CD8-positive, alpha-beta T cell (primary cell): ENCODE measurements at regions of chr2 and their contacts with region 1.

Region 1: DNA sequence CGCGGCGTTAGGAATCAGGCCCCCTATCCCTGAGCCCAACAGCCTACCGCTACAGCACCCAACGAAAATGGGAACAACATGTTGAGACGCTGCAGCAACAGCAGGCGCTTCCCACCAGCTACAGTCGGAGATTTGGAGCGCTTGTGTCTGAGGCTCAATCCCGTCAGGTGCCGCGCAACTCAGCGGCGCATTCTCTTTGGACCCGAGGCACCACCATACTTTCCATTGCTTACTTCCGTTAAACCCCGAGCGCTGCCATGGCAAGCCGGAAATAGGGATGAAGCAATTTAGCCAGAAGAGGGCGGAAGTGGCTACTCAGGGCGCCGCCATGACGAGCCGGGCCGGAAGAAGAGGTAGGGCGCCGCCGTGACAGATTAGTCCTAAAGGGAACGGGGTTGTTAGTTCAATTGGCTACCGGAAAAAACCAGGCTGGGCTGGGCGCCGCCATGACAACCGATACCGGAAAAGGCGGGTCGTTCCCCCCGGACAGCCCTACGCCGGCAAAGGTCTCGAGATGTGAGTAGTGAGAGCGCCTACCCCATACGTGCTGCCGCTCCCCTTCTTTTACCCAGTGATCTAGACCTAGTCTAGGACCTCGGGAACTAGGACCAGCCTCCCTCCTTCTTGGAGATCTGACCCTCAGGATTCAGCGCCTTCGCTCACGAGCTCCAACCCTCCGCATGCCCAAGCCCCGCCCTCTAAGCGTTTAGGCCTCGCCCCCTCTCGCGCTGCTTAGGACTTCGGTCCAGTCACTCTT is at the start of gene CHCHD5:
- DNase-seq: peak; percentile 85 to 97 (median 92)
- ATAC-seq: peak; percentile 84
- H3K4me3 ChIP-seq: peak within 1 kb of the TSS; percentile 79 to 96
- H3K4me3 Mint-ChIP-seq: peak within 1 kb of the TSS; percentile 95
- H3K27ac ChIP-seq: peak within 1 kb of the TSS; percentile 75 to 95
- H3K27ac Mint-ChIP-seq: peak within 1 kb of the TSS; percentile 94
- H3K4me1 ChIP-seq: peaks cover 24% of the 10 kb centered on the region
- H3K4me1 Mint-ChIP-seq: peaks cover 35% of the 10 kb centered on the region
- H3K27me3 ChIP-seq: no peaks in the 10 kb centered on the region
- H3K27me3 Mint-ChIP-seq: no peaks in the 10 kb centered on the region
- CTCF ChIP-seq: no peak
- total RNA-seq, gene CHCHD5: 12.0 to 15.5 TPM

Region 2: GRCh38 chr2:112187805-112188596 is 396.3 kb before region 1 on chr2:
- CTCF ChIA-PET with region 1: no interaction called
- POLR2A ChIA-PET with region 1: no interaction called
- intact Hi-C with region 1: loop called in 1 of 2 experiments (anchors 10 kb)
- DNase-seq: peak; percentile 30 to 85 (median 77)
- ATAC-seq: peak; percentile 82
- H3K4me3 ChIP-seq: peak overlapping the region; percentile 16 to 23
- H3K4me3 Mint-ChIP-seq: peak overlapping the region; percentile 59
- H3K27ac ChIP-seq: peak overlapping the region; percentile 72 to 94
- H3K27ac Mint-ChIP-seq: peak overlapping the region; percentile 100
- H3K4me1 ChIP-seq: peaks cover 31% of the 10 kb centered on the region
- H3K4me1 Mint-ChIP-seq: peaks cover 63% of the 10 kb centered on the region
- H3K27me3 ChIP-seq: no peaks in the 10 kb centered on the region
- H3K27me3 Mint-ChIP-seq: no peaks in the 10 kb centered on the region
- CTCF ChIP-seq: no peak

Region 3: GRCh38 chr2:112481050-112481527 is 103.2 kb before region 1 on chr2:
- CTCF ChIA-PET with region 1: interaction called, 13 read pairs
- POLR2A ChIA-PET with region 1: interaction called, 3 read pairs
- intact Hi-C with region 1: loop called (anchors 1 kb)
- DNase-seq: peak; percentile 63 to 90 (median 84)
- ATAC-seq: peak; percentile 78
- H3K4me3 ChIP-seq: peak overlapping the region; percentile 56 to 87
- H3K4me3 Mint-ChIP-seq: peak overlapping the region; percentile 95
- H3K27ac ChIP-seq: peak overlapping the region; percentile 30 to 53
- H3K27ac Mint-ChIP-seq: peak overlapping the region; percentile 93
- H3K4me1 ChIP-seq: peaks cover 16% of the 10 kb centered on the region
- H3K4me1 Mint-ChIP-seq: peaks cover 21% of the 10 kb centered on the region
- H3K27me3 ChIP-seq: no peaks in the 10 kb centered on the region
- H3K27me3 Mint-ChIP-seq: no peaks in the 10 kb centered on the region
- CTCF ChIP-seq: peak; percentile 76

Region 4: GRCh38 chr2:112626604-112627059 is 42.3 kb after region 1 on chr2:
- CTCF ChIA-PET with region 1: interaction called, 4 read pairs
- POLR2A ChIA-PET with region 1: interaction called, 3 read pairs
- intact Hi-C with region 1: loop called in 1 of 2 experiments (anchors 1 kb)
- DNase-seq: peak; percentile 36 to 87 (median 65)
- ATAC-seq: peak; percentile 43
- H3K4me3 ChIP-seq: peak overlapping the region; percentile 23 to 52
- H3K4me3 Mint-ChIP-seq: peak overlapping the region; percentile 68
- H3K27ac ChIP-seq: peak overlapping the region; percentile 3 to 41
- H3K27ac Mint-ChIP-seq: peak overlapping the region; percentile 83
- H3K4me1 ChIP-seq: peaks cover 64% of the 10 kb centered on the region
- H3K4me1 Mint-ChIP-seq: peaks cover 54% of the 10 kb centered on the region
- H3K27me3 ChIP-seq: no peaks in the 10 kb centered on the region
- H3K27me3 Mint-ChIP-seq: no peaks in the 10 kb centered on the region
- CTCF ChIP-seq: peak; percentile 83

Region 5: DNA sequence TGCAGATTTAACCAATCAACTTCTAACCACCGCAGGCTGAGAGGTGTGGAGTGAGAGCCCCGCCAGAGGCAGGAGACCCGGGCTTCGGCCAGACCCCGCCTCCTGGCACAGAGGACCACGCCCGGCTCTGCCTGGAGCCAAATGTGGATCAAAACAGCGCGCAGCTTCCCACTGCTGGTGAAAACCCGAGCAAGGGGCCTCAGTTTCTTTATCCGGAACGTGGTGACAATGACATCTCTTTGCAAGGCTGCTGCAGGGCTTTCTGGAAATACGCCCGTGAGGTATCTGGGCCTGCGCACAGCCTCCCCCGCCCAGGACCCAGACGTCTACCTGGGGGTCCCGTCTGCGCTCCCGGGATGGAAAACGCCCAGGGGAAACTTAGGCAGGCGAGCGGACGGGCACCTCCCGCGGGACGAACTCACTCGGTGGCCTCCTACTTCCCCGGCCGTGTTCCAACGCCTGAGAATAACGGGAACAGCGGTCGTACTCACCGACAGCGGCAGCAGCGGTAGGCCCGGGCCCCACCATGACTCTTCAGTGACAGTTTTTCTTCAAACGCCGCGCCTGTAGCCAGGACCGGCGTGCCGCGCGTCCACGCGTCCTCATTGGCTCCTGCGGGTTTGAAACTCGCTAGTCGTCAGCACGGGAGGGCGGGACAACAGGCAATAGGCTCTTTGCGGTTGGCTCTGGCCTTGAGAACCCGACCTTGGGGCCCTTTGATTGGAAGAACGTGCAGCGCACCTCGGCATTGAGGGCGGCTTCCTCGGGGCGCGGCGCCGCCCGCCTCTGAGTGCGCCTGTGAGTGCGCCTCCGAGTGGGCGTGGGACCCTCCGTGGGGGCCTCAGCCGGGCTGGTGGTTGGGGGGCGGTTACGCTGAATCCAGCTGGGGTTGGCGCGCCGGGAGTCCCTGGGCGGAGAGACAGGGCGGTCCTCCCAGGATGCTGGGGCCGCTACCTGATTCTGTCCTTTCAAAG is 180.0 kb after region 1 on chr2 and contains the start of gene CKAP2L:
- CTCF ChIA-PET with region 1: interaction called, 3 read pairs
- POLR2A ChIA-PET with region 1: no interaction called
- intact Hi-C with region 1: loop called in 1 of 2 experiments (anchors 1 kb)
- DNase-seq: peak; percentile 85 to 98 (median 94)
- ATAC-seq: peak; percentile 98
- H3K4me3 ChIP-seq: peak within 1 kb of the TSS; percentile 72 to 74
- H3K4me3 Mint-ChIP-seq: peak within 1 kb of the TSS; percentile 92
- H3K27ac ChIP-seq: peak within 1 kb of the TSS; percentile 5 to 54
- H3K27ac Mint-ChIP-seq: peak within 1 kb of the TSS; percentile 70
- H3K4me1 ChIP-seq: peaks cover 12% of the 10 kb centered on the region
- H3K4me1 Mint-ChIP-seq: peaks cover 27% of the 10 kb centered on the region
- H3K27me3 ChIP-seq: no peaks in the 10 kb centered on the region
- H3K27me3 Mint-ChIP-seq: no peaks in the 10 kb centered on the region
- CTCF ChIP-seq: no peak
- total RNA-seq, gene CKAP2L: 0.50 to 0.57 TPM

Region 6: GRCh38 chr2:112996635-112997034 is 412.3 kb after region 1 on chr2:
- CTCF ChIA-PET with region 1: no interaction called
- POLR2A ChIA-PET with region 1: no interaction called
- intact Hi-C with region 1: no loop called
- DNase-seq: peak; percentile 56 to 93 (median 71)
- ATAC-seq: peak; percentile 97
- H3K4me3 ChIP-seq: peak overlapping the region in 1 of 2 experiments; percentile 6
- H3K4me3 Mint-ChIP-seq: peak overlapping the region; percentile 40
- H3K27ac ChIP-seq: peak overlapping the region in 1 of 2 experiments; percentile 21
- H3K27ac Mint-ChIP-seq: peak overlapping the region; percentile 97
- H3K4me1 ChIP-seq: peaks cover 36% of the 10 kb centered on the region
- H3K4me1 Mint-ChIP-seq: peaks cover 46% of the 10 kb centered on the region
- H3K27me3 ChIP-seq: no peaks in the 10 kb centered on the region
- H3K27me3 Mint-ChIP-seq: no peaks in the 10 kb centered on the region
- CTCF ChIP-seq: no peak